Activated CD8-positive, alpha-beta T cell treated with anti-CD3 and anti-CD28 coated beads for 36 hours (primary cell): ENCODE measurements at regions of chr16 and their contacts with region 1.

Region 1: GRCh38 chr16:28981517-28981916 is 3.3 kb upstream of the LAT start:
- DNase-seq: peak; percentile 73
- ATAC-seq: no peak
- H3K4me3 Mint-ChIP-seq: no peak overlapping the region
- H3K27ac Mint-ChIP-seq: no peak overlapping the region
- H3K4me1 Mint-ChIP-seq: peaks cover 34% of the 10 kb centered on the region
- H3K27me3 Mint-ChIP-seq: no peaks in the 10 kb centered on the region
- CTCF ChIP-seq: peak; percentile 75

Region 2: DNA sequence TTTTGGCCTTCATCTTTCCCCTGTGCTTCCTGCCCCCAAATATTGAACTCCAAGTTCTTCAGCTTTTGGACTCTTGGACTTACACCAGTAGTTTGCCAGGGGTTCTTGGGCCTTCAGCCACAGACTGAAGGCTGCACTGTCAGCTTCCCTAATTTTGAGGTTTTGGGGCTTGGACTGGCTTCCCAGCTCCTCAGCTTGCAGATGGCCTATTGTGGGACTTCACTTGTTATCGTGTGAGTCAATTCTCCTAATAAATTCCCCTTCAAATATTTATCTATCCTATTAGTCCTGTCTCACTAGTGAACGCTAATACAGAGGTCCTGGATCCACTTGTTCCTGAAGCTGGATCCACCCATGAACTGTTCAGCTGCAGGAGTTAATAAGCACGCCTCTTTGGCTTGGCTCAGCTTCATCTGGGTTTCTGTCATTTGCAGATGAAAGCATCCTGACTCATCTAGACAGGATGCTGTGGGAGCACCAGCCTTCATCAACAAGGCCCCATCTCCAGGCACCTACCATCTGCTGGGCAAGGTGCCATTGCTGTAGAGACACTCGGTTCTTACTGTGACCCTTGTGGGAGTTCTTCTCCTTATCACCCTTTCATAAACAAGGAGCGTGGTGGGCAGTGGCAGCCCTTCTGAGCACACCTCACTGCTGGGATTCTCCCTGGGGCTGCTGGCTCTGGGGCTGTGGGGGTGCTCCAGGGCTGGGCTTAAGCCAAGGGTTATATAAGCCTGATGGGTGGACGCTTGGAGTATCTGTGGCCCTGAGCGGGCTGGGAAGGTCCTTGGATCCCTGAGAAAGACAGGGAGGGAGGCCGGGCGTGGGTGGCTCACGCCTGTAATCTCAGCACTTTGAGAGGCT is 26.4 kb after region 1 on chr16:
- CTCF ChIA-PET with region 1: interaction called, 4 read pairs
- POLR2A ChIA-PET with region 1: interaction called, 12 read pairs
- intact Hi-C with region 1: no loop called
- DNase-seq: peak; percentile 91
- ATAC-seq: peak; percentile 86
- H3K4me3 Mint-ChIP-seq: peak overlapping the region; percentile 38
- H3K27ac Mint-ChIP-seq: peak overlapping the region; percentile 99
- H3K4me1 Mint-ChIP-seq: peaks cover 51% of the 10 kb centered on the region
- H3K27me3 Mint-ChIP-seq: no peaks in the 10 kb centered on the region
- CTCF ChIP-seq: no peak

Region 3: GRCh38 chr16:29012913-29013553 is 31.5 kb after region 1 on chr16:
- CTCF ChIA-PET with region 1: interaction called, 4 read pairs
- POLR2A ChIA-PET with region 1: interaction called, 12 read pairs
- intact Hi-C with region 1: no loop called
- DNase-seq: peak; percentile 52
- ATAC-seq: peak; percentile 29
- H3K4me3 Mint-ChIP-seq: peak overlapping the region; percentile 2
- H3K27ac Mint-ChIP-seq: peak overlapping the region; percentile 91
- H3K4me1 Mint-ChIP-seq: peaks cover 59% of the 10 kb centered on the region
- H3K27me3 Mint-ChIP-seq: no peaks in the 10 kb centered on the region
- CTCF ChIP-seq: no peak

Region 4: GRCh38 chr16:29023279-29024277 is 42.1 kb after region 1 on chr16:
- CTCF ChIA-PET with region 1: interaction called, 17 read pairs
- POLR2A ChIA-PET with region 1: interaction called, 97 read pairs
- intact Hi-C with region 1: loop called (anchors 5 kb)
- DNase-seq: peak; percentile 45
- ATAC-seq: peak; percentile 8
- H3K4me3 Mint-ChIP-seq: peak overlapping the region; percentile 52
- H3K27ac Mint-ChIP-seq: peak overlapping the region; percentile 91
- H3K4me1 Mint-ChIP-seq: peaks cover 79% of the 10 kb centered on the region
- H3K27me3 Mint-ChIP-seq: no peaks in the 10 kb centered on the region
- CTCF ChIP-seq: no peak

Region 5: GRCh38 chr16:29029168-29029994 is 47.9 kb after region 1 on chr16:
- CTCF ChIA-PET with region 1: interaction called, 17 read pairs
- POLR2A ChIA-PET with region 1: interaction called, 97 read pairs
- intact Hi-C with region 1: loop called (anchors 5 kb)
- DNase-seq: peak; percentile 98
- ATAC-seq: peak; percentile 97
- H3K4me3 Mint-ChIP-seq: peak overlapping the region; percentile 56
- H3K27ac Mint-ChIP-seq: peak overlapping the region; percentile 82
- H3K4me1 Mint-ChIP-seq: peaks cover 49% of the 10 kb centered on the region
- H3K27me3 Mint-ChIP-seq: no peaks in the 10 kb centered on the region
- CTCF ChIP-seq: no peak